ENCODE measurements at regions of chr16 and their contacts with region 1.

Region 1: DNA sequence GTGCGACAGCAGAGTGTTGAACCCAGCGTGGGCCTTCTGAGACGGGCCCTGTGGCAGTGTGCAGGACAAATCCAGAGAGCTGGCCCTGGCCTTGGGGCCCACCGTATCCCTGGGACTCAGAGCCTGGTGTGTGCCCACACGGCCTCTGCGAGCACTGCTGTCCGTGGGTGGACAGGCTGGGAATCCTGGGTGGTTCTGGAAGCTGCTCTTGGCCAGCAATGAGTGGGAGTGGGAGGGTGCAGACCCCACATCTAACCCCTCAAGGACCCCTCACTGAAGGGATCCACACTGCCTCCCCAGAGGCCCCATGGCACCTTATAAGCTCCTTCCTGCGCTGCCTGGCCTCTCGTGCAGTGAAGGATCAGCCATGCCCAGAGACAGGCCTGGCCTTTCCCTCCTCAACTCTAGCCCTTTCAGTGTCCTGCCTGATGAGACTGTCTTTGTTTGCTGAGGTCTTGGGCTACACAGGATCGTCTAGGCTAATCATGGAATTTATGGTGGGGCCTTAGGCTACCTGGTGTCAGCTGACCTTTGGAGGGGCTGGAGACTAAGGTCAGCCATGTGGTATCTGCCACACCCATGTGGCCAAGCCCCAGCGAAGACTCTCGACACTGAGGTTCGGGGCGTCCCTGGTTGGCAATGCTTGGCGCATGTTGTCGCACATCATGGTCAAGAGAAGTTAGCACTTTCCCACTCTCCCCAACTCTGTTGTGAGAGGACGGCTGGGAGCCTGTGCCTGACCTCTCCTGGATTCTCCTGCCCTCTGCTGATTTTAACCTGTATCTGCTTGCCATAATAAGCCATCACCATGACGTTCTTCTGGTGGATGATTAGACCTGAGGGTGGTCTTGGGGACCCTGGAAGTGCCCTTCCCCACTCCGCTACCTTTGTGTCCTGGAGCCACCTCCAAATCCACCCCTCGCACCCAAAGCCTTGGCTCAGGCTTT is 16.4 kb upstream of the GINS2 start:
- DNase-seq: no peak
- H3K4me3 ChIP-seq: no peak overlapping the region
- H3K27ac ChIP-seq: no peak overlapping the region
- H3K4me1 ChIP-seq: no peaks in the 10 kb centered on the region
- H3K27me3 ChIP-seq: no peaks in the 10 kb centered on the region
- CTCF ChIP-seq: no peak

Region 2: DNA sequence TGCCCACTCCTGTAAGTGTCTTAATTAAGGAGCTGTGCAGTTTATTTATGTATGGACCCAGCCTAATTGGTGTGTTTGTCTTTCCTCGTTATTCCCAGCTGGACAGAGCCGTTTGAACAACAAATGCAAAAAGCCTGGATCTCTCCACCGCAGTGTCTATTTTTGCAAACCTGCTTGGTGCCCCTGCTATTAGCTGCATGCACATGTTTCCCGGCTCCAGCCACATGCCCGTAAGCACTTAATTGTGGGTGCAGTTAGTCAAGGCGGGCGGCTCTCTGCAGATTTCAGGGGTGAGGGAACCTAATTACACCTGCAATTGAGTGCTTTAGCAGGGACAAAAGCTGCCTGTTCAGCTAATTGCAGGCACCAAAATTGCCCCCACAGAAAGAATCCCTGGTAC is 166.1 kb before region 1 on chr16:
- CTCF ChIA-PET with region 1: no interaction called
- POLR2A ChIA-PET with region 1: interaction called, 11 read pairs
- intact Hi-C with region 1: no loop called
- DNase-seq: no peak
- H3K4me3 ChIP-seq: no peak overlapping the region
- H3K27ac ChIP-seq: no peak overlapping the region
- H3K4me1 ChIP-seq: peaks cover 8% of the 10 kb centered on the region
- H3K27me3 ChIP-seq: no peaks in the 10 kb centered on the region
- CTCF ChIP-seq: no peak

Region 3: GRCh38 chr16:85564277-85565051 is 140.7 kb before region 1 on chr16:
- CTCF ChIA-PET with region 1: no interaction called
- POLR2A ChIA-PET with region 1: no interaction called
- intact Hi-C with region 1: no loop called
- DNase-seq: no peak
- H3K4me3 ChIP-seq: no peak overlapping the region
- H3K27ac ChIP-seq: no peak overlapping the region
- H3K4me1 ChIP-seq: peaks cover 40% of the 10 kb centered on the region
- H3K27me3 ChIP-seq: no peaks in the 10 kb centered on the region
- CTCF ChIP-seq: peak; percentile 63